Colonic mucosa (tissue), 4 donors: ENCODE measurements at regions of chr15 and their contacts with region 1.

Region 1: GRCh38 chr15:65638681-65639089 is 16.9 kb downstream of the SLC24A1 start:
- DNase-seq: peak; percentile 54
- H3K4me3 ChIP-seq: no peak overlapping the region
- H3K27ac ChIP-seq: no peak overlapping the region
- H3K4me1 ChIP-seq: no peaks in the 10 kb centered on the region
- H3K27me3 ChIP-seq: no peaks in the 10 kb centered on the region
- CTCF ChIP-seq: peak; percentile 70

Region 2: DNA sequence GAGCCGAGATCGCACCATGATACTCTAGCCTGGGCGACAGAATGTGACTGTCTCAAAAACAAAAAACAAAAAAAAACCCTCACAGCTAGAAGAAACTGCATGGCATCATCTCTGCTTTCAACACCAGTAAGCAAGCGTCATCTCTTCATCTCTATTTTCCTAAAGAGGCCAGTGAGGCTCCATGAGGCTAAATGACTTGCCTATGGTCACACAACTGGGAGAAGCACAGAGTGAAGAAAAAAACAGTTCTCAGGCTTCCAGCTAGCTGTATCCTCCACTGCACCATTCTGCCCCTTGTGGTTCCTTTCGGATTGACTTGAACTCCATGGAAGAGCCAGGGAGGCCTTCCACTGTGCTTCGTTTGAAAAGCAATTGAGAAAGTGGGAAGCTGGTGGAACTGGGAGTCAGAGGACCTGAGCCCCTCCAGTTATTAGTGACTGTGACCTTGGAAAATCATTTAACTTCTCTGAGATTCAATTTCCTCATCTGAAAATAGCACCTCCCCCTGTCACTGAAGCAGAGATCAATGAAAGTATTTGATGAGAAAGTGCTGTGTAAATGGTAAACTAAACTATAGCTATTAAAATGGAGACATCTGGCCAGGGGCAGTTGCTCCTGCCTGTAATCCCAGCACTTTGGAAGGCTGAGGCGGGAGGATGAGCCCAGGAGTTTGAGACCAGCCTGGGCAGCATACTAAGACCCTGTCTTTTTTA is 185.5 kb after region 1 on chr15:
- intact Hi-C with region 1: loop called (anchors 10 kb)
- DNase-seq: peak; percentile 67
- H3K4me3 ChIP-seq: no peak overlapping the region
- H3K27ac ChIP-seq: no peak overlapping the region
- H3K4me1 ChIP-seq: no peaks in the 10 kb centered on the region
- H3K27me3 ChIP-seq: no peaks in the 10 kb centered on the region
- CTCF ChIP-seq: peak; percentile 57

Region 3: DNA sequence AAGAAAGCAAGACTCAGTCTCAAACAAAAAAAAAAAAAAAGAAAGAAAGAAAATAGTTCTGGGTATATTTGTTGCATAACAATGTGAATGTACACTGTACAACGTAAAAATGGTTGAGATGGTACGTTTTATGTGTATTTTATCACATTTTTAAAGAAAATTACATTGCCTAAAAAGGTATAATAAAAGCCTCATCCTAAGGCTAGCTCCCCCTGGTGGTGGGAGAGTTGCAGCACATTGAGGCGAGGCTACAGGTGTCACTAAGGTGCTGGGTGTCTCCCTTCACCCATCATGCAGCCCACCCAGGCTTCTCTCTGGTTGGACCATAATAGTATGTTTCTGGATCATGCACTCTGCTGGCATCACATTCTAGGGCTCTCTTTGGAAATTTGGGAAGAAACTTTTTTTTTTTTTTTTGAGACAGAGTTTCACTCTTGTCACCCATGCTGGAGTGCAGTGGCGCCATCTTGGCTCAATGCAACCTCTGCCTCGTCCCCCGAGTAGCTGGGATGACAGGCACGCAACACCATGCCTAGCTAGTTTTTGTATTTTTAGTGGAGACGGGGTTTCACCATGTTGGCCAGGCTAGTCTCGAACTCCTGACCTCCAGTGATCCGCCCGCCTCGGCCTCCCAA is 218.3 kb after region 1 on chr15:
- intact Hi-C with region 1: loop called (anchors 2 kb)
- DNase-seq: peak; percentile 86
- H3K4me3 ChIP-seq: no peak overlapping the region
- H3K27ac ChIP-seq: no peak overlapping the region
- H3K4me1 ChIP-seq: no peaks in the 10 kb centered on the region
- H3K27me3 ChIP-seq: no peaks in the 10 kb centered on the region
- CTCF ChIP-seq: peak; percentile 90